Left colon (tissue), 2 donors: ENCODE measurements at regions of chr2 and their contacts with region 1.

Region 1: GRCh38 chr2:230798769-230799399 is 65.9 kb upstream of the ITM2C start:
- DNase-seq: no peak
- ATAC-seq: peak; percentile 52

Region 2: GRCh38 chr2:230712443-230713330 is 86.2 kb before region 1 on chr2 and contains the start of gene CAB39:
- intact Hi-C with region 1: loop called in 1 of 2 experiments (anchors 10 kb)
- DNase-seq: peak; percentile 89 to 91
- ATAC-seq: peak; percentile 77
- total RNA-seq, gene CAB39: 116 to 143 TPM

Region 3: DNA sequence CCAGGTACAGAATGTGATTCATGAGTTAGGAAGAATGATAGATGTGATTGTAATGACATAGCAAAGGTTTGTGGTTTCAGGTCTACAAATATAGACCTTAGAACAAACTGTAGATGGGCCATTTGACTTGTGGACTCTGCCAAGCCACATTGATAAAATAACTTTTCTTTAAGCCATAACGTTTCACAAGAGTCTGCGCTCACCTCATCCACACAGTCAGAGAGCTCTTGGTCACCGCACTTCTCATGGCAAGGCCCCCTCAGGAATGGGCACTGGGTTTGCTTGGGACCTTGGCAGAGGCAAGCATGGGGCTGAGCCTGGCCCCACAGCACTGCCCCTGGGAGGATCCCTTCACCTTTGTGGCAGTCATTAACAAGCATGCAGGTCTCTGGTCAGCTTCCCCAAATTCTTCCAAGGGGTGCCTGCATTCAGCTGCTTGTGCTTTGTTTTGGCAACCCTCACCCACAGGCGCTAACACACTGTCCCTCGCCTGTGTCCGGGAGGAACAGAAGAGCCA is 413.5 kb after region 1 on chr2:
- intact Hi-C with region 1: no loop called
- DNase-seq: no peak
- ATAC-seq: no peak